Lower leg skin (tissue), 4 donors: ENCODE measurements at regions of chr11 and their contacts with region 1.

Region 1: DNA sequence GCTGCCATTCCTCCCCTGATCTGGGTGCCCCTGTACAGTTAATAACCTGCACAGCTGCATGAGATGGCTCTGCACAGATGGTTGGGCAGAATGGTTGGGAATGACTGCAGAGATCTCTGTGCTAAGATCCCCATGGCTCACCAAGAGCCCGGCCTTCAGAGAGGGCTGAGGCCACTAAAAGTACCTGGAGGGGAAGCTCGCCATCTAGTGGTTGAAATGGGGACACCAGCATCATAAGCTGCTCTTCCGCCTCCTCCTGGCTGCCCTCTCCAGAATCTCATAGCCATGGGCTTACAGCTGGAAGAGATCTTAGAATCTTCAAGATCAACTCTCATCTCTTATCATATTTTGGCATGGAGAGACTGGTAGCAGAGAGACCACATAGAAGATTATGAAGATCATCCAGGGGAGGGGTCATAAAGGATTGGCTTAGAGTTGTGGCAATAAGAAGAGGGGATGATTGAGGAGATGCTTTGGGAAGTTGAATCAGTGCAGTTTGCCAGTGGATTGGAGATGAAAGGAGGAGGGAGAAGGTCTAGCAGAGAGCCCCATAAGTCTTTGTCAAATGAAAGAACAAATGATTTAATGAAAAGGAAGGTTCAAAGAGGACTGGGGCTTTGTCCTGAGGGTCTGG is 22.0 kb upstream of the TLCD5 start:
- DNase-seq: peak; percentile 78 to 92
- H3K4me3 ChIP-seq: no peak overlapping the region
- CTCF ChIP-seq: peak in 1 of 3 donors; percentile 58
- POLR2A ChIP-seq: no peak

Region 2: DNA sequence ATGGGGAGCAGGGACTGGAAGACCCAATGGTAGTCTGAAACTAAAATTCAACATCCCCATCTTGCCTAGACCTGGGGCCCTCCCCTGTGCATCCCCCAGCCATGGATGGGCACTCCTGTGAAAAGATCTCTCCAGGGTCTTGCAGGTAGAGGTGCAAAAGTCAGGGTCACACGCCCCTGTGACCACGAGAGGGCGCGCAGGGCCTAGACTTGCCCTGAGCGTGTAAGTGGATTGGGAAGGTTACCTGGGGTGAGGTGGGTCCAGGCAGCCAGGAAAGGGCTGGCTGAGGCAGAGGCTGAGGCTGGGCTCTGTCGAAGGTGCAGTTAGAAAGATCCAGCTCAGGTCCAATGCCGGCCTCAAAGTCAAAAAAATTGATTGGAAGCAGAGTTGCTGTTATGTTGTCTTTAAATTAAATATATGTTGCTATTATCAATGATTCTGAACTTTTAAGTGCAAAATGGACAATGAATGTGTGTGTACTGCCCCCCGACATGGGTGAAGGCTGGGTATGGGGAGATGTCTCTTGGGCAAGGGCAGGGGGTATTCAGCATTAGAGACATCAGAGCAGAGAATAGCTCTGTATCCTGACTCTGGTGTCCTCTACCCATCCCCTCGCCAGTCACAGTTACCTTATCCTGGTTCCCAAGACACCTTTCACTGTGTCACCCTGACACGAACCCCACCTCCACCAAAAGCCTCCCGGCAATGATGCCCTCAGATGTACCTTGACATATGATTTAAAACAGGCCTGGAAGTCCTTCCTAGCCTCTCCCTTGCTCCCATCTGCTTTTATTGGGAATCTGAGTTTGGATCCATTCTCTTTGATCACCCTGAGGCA is 67.9 kb before region 1 on chr11:
- intact Hi-C with region 1: loop called (anchors 2 kb)
- DNase-seq: peak; percentile 54 to 90
- H3K4me3 ChIP-seq: no peak overlapping the region
- CTCF ChIP-seq: peak in 1 of 3 donors; percentile 9
- POLR2A ChIP-seq: no peak

Region 3: DNA sequence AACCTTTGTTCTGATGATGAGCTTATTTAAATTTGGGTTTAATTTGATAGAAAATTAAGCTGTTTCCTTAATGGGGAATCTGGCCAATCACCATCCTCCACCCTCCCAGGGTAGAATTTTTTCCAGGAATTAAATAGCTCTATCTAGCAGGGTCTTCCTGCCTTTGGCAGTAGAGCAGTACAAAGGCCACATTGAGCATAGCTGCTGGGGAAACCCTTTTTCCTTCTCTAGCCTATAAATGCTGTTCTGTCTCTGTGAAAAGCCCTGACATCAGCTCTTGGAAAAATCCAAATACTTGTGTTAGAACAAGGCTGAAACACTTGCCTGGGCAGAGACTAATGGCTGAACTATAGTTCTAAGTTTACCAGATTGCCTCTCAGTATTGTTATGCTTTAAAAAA is 88.2 kb after region 1 on chr11:
- intact Hi-C with region 1: no loop called
- DNase-seq: no peak
- H3K4me3 ChIP-seq: no peak overlapping the region
- CTCF ChIP-seq: no peak
- POLR2A ChIP-seq: no peak